ENCODE measurements at regions of chr1 and their contacts with region 1.

Region 1: DNA sequence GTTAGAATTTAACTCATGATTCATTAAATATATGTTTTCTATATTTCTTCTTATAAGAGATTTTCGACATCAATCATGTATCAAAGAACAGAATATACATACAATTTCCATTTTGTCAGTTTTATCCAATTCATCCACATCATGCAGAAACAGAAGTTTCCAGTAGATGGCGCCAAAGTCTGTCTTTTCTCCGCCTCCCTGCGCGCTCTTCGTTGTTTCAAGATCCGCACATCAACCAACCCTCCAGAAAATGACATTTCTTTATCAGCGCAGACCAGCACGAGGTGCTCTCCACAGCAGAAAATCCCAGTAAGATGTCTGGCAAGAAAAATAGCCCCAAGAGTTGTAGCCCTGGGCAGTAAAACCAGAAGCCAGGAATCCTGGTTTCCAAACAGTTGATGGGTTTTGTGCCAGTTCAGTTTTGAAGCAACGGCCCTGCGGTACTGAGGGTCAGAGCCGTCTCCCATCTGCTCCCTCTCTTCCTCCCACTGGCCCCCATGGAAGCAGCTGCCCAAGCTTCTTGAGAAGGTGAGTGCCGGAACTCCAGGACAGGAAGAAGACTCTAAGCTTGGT is 38.6 kb upstream of the GPR137B start:
- DNase-seq: no peak
- H3K4me3 ChIP-seq: peak overlapping the region in 1 of 4 donors; percentile 26
- H3K27ac ChIP-seq: no peak overlapping the region
- H3K4me1 ChIP-seq: peaks cover 0 to 10% (median 0%) of the 10 kb centered on the region in 3 donors
- H3K27me3 ChIP-seq: peaks cover 0 to 25% (median 0%) of the 10 kb centered on the region in 4 donors
- CTCF ChIP-seq: peak; percentile 64 to 88 (median 84)
- POLR2A ChIP-seq: no peak

Region 2: DNA sequence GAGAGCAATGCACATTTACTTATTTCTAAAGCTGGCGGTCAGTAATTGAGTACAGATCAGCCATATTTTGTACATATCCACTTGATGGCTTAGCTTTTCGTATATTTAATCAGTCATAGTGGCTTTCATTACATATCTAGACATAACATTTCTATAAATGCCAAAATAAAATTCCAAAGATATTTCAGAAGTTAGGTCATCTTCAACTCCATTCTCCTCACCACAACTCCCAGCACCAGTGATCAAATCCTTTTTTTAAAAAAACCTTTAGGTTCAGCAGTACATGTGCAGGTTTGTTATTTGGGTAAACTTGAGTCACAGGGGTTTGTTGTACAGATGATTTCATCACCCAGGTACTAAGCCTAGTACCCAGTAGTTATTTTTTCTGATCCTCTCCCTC is 400.2 kb before region 1 on chr1:
- intact Hi-C with region 1: no loop called
- DNase-seq: no peak
- H3K4me3 ChIP-seq: no peak overlapping the region
- H3K27ac ChIP-seq: no peak overlapping the region
- H3K4me1 ChIP-seq: peaks cover 0 to 8% (median 0%) of the 10 kb centered on the region in 3 donors
- H3K27me3 ChIP-seq: no peaks in the 10 kb centered on the region
- CTCF ChIP-seq: no peak
- POLR2A ChIP-seq: no peak

Region 3: DNA sequence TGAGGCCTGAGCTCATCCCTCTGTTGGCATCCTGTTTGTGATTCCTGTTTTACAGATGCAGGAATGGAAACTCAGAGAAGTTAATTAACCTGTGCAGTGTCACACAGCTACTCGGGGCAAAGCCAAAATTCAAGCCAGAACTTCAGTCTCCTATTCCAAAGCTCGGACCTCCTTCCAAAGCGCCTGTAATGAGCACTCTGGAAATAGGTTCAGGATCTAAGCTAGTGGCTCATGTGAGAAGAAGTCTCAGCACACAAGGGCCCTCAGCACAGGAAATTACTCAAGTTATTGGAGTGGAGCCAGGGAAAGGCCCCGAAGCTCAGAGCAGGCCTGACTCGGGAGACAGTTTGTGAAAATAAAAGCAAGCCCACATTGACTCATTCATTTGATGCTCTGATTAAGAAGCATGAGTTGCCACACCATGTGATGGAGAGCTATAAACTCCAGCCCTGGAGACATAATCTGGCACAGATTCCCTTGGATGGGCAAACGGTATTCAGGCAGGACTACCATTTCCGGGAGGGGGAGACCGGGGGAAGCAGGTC is 186.4 kb before region 1 on chr1:
- intact Hi-C with region 1: no loop called
- DNase-seq: no peak
- H3K4me3 ChIP-seq: no peak overlapping the region
- H3K27ac ChIP-seq: peak overlapping the region; percentile 70 to 89 (median 85)
- H3K4me1 ChIP-seq: peaks cover 36 to 50% (median 43%) of the 10 kb centered on the region in 3 donors
- H3K27me3 ChIP-seq: no peaks in the 10 kb centered on the region
- CTCF ChIP-seq: no peak
- POLR2A ChIP-seq: no peak

Region 4: GRCh38 chr1:236489710-236490377 is 386.1 kb after region 1 on chr1:
- intact Hi-C with region 1: loop called (anchors 5 kb)
- DNase-seq: no peak
- H3K4me3 ChIP-seq: no peak overlapping the region
- H3K27ac ChIP-seq: no peak overlapping the region
- H3K4me1 ChIP-seq: peaks cover 0 to 9% (median 0%) of the 10 kb centered on the region in 3 donors
- H3K27me3 ChIP-seq: peaks cover 0 to 8% (median 0%) of the 10 kb centered on the region in 4 donors
- CTCF ChIP-seq: peak; percentile 44 to 79 (median 66)
- POLR2A ChIP-seq: no peak

Region 5: DNA sequence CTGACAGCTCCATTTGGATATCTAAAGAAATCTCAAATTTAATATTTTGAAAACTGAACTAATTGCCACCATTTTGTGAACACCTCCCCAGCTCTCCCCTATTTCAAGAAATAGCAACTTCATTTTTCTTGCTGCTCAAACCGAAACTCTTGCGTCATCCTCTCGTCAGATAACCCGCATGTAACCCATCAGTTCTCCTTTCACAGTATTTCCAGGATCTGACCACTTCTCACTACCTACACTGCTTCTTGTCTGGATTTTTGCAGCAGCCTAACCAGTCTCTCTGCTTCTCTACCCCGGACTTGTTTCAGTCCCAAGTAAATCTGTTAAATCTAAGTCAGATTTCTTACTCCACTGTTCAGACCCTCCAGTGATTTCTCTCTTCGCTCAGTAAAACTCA is 767.0 kb after region 1 on chr1:
- intact Hi-C with region 1: loop called (anchors 10 kb)
- DNase-seq: no peak
- H3K4me3 ChIP-seq: no peak overlapping the region
- H3K27ac ChIP-seq: no peak overlapping the region
- H3K4me1 ChIP-seq: no peaks in the 10 kb centered on the region
- H3K27me3 ChIP-seq: no peaks in the 10 kb centered on the region
- CTCF ChIP-seq: no peak
- POLR2A ChIP-seq: no peak

Measured in esophagus squamous epithelium (tissue), 5 donors.